Naive thymus-derived CD4-positive, alpha-beta T cell (primary cell): ENCODE measurements at regions of chr5 and their contacts with region 1.

Region 1: GRCh38 chr5:178732281-178732680 is 1.8 kb upstream of the ZNF354A start:
- DNase-seq: no peak
- ATAC-seq: no peak
- H3K4me3 ChIP-seq: no peak overlapping the region
- H3K4me3 Mint-ChIP-seq: peak overlapping the region in 1 of 10 donors; percentile 42
- H3K27ac ChIP-seq: no peak overlapping the region
- H3K27ac Mint-ChIP-seq: peak overlapping the region in 1 of 9 donors; percentile 45
- H3K4me1 ChIP-seq: no peaks in the 10 kb centered on the region
- H3K4me1 Mint-ChIP-seq: peaks cover 0 to 13% (median 11%) of the 10 kb centered on the region in 7 donors
- H3K27me3 ChIP-seq: no peaks in the 10 kb centered on the region
- H3K27me3 Mint-ChIP-seq: peaks cover 0 to 3% (median 0%) of the 10 kb centered on the region in 5 donors

Region 2: DNA sequence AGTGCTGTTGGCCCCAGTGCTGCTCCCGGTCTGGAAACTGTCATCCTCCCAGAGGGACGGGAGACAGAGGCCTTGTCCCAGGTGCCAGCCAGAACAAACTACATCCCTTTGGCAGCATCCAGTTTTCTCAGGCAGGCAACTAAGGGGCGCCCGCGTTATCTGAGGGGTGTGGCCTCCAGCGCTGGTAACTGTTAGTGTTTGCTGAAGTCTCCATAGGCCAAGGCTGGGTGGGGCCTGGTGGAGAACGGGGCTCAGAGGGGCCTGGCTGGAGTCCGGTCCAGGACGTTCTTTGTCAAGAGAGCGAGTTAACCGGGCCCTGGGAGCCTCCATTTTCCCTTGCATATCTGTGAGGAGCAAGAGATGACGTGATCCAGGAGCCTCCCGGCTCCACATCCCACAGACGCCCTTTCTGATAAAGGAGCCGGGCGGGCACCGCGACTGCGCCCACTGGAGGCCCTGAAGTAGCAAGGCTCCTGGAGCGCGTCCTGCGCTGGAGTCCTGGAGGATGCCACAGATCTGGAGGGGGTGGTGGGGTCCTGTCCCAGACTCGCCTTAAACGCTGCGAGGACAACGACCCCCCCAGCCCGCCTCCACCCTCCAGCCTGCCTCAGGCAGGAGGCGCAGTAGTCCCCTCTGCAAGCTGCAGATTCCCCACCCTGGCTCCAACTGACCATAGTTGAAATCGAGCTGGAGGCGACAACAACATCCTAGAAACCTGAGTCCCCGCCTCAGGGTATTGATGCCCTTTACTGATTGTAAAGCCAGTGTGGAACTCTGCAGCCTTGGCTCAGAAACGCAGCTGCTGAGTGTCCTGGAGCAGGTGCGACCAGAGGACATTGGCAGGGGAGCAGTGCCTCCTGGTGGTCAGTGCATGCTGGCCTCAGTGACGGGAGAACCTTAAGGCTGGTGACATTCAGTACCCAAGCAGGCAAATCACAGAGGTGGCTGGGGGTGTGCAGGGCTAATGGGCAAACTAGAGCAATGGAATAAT is 106.7 kb after region 1 on chr5:
- CTCF ChIA-PET with region 1: no interaction called
- POLR2A ChIA-PET with region 1: no interaction called
- intact Hi-C with region 1: loop called in 1 of 2 experiments (anchors 1 kb)
- DNase-seq: peak in 7 of 9 donors; percentile 15 to 44 (median 21)
- ATAC-seq: peak; percentile 84
- H3K4me3 ChIP-seq: no peak overlapping the region
- H3K4me3 Mint-ChIP-seq: no peak overlapping the region
- H3K27ac ChIP-seq: no peak overlapping the region
- H3K27ac Mint-ChIP-seq: no peak overlapping the region
- H3K4me1 ChIP-seq: no peaks in the 10 kb centered on the region
- H3K4me1 Mint-ChIP-seq: no peaks in the 10 kb centered on the region
- H3K27me3 ChIP-seq: no peaks in the 10 kb centered on the region
- H3K27me3 Mint-ChIP-seq: peaks cover 0 to 3% (median 0%) of the 10 kb centered on the region in 5 donors

Region 3: GRCh38 chr5:178895651-178896571 is 163.6 kb after region 1 on chr5 and contains the start of gene ZFP2:
- CTCF ChIA-PET with region 1: interaction called, 3 read pairs
- POLR2A ChIA-PET with region 1: no interaction called
- intact Hi-C with region 1: loop called in 1 of 2 experiments (anchors 1 kb)
- DNase-seq: peak in 8 of 9 donors; percentile 4 to 26 (median 12)
- ATAC-seq: peak; percentile 75
- H3K4me3 ChIP-seq: peak within 1 kb of the TSS; percentile 47
- H3K4me3 Mint-ChIP-seq: peak within 1 kb of the TSS; percentile 59 to 93 (median 88)
- H3K27ac ChIP-seq: peak within 1 kb of the TSS; percentile 46
- H3K27ac Mint-ChIP-seq: peak within 1 kb of the TSS in 7 of 9 donors; percentile 32 to 67 (median 56)
- H3K4me1 ChIP-seq: no peaks in the 10 kb centered on the region
- H3K4me1 Mint-ChIP-seq: peaks cover 0 to 12% (median 6%) of the 10 kb centered on the region in 7 donors
- H3K27me3 ChIP-seq: no peaks in the 10 kb centered on the region
- H3K27me3 Mint-ChIP-seq: peaks cover 0 to 7% (median 5%) of the 10 kb centered on the region in 5 donors
- total RNA-seq, gene ZFP2: 0.17 to 3.2 (median 1.0) TPM

Region 4: DNA sequence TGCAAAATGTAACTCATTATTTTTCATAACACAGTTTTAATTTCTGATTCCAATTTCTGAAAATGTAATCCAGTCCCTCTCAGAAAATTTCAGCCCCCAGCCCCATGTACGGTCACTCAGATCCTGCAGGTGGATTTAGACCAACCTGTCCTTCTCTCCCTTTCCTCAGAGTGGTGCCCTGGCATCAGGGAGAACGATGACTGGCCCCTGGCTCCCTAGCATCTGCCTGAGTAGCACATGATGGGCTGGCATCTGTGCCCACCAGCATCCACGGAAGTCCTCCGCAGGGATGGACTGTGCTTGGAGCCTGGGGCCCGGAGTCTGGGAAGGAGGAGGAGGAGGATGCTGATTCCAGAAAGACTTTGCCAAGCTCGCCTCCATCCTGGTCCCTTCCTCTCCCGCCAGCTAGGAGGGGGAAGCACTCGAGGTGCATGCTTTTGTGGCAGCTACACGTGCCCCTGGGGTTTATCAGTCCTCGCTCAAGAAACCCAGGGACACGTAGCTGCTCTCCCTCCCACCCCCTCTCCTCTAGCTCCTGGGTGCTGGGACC is 763.7 kb after region 1 on chr5:
- CTCF ChIA-PET with region 1: no interaction called
- POLR2A ChIA-PET with region 1: no interaction called
- intact Hi-C with region 1: loop called (anchors 1 kb)
- DNase-seq: no peak
- ATAC-seq: no peak
- H3K4me3 ChIP-seq: no peak overlapping the region
- H3K4me3 Mint-ChIP-seq: no peak overlapping the region
- H3K27ac ChIP-seq: no peak overlapping the region
- H3K27ac Mint-ChIP-seq: no peak overlapping the region
- H3K4me1 ChIP-seq: no peaks in the 10 kb centered on the region
- H3K4me1 Mint-ChIP-seq: peaks cover 0 to 1% (median 0%) of the 10 kb centered on the region in 7 donors
- H3K27me3 ChIP-seq: no peaks in the 10 kb centered on the region
- H3K27me3 Mint-ChIP-seq: peaks cover 0 to 5% (median 0%) of the 10 kb centered on the region in 5 donors